ENCODE measurements at regions of chr9 and their contacts with region 1.

Region 1: GRCh38 chr9:128947422-128948301 is at the starts of genes DOLK and NUP188:
- DNase-seq: peak; percentile 99
- H3K4me3 Mint-ChIP-seq: peak within 1 kb of the TSS; percentile 98
- H3K27ac Mint-ChIP-seq: peak within 1 kb of the TSS; percentile 98
- H3K4me1 Mint-ChIP-seq: peaks cover 18% of the 10 kb centered on the region
- H3K27me3 Mint-ChIP-seq: no peaks in the 10 kb centered on the region
- total RNA-seq, gene DOLK: 13.0 and 13.3 TPM in 2 replicates
- total RNA-seq, gene NUP188: 161 and 175 TPM in 2 replicates

Region 2: DNA sequence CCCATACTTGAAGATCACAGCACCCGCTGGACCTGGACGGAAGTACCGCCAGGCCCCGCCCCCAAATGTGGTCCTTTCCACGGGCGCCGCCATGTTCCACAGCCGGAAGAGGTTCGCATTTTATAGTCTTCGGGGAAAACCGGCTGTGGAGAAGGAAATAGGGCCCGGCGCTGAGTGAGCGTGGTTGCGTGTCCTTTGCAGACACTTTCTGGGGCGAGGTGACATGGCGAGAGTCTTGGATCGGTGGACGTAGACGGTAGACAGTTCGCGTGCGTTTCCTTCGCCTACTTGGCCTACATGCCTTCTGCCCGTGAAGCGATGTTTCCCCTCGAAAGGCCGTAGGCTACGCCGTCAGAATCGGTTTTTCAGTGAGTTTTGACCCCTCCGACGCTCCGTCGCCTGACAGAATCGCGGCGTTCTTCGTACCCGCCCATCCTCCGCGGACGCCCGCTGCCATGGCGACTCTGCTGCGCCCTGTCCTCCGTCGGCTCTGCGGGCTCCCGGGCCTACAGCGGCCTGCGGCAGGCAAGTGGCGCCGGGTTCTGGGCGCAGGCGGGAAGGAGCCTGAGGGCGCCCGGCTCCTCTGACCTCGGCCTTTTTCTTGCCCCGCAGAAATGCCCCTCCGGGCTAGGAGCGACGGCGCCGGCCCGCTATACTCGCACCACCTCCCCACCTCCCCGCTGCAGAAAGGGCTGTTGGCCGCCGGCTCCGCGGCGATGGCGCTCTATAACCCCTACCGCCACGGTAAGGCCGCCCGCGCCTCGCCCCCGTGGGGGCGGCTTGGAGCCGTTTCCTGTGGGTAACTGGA is 625.1 kb before region 1 on chr9 and contains the starts of genes COQ4 and TRUB2:
- intact Hi-C with region 1: loop called (anchors 5 kb)
- DNase-seq: peak; percentile 90
- H3K4me3 Mint-ChIP-seq: peak within 1 kb of the TSS; percentile 99
- H3K27ac Mint-ChIP-seq: peak within 1 kb of the TSS; percentile 99
- H3K4me1 Mint-ChIP-seq: peaks cover 11% of the 10 kb centered on the region
- H3K27me3 Mint-ChIP-seq: no peaks in the 10 kb centered on the region
- total RNA-seq, gene COQ4: 49.6 and 52.2 TPM in 2 replicates
- total RNA-seq, gene TRUB2: 33.5 and 36.1 TPM in 2 replicates

Region 3: GRCh38 chr9:128902351-128903078 is 45.1 kb before region 1 on chr9:
- intact Hi-C with region 1: loop called (anchors 2 kb)
- DNase-seq: peak; percentile 82
- H3K4me3 Mint-ChIP-seq: peak overlapping the region; percentile 53
- H3K27ac Mint-ChIP-seq: peak overlapping the region; percentile 84
- H3K4me1 Mint-ChIP-seq: peaks cover 54% of the 10 kb centered on the region
- H3K27me3 Mint-ChIP-seq: no peaks in the 10 kb centered on the region

Region 4: DNA sequence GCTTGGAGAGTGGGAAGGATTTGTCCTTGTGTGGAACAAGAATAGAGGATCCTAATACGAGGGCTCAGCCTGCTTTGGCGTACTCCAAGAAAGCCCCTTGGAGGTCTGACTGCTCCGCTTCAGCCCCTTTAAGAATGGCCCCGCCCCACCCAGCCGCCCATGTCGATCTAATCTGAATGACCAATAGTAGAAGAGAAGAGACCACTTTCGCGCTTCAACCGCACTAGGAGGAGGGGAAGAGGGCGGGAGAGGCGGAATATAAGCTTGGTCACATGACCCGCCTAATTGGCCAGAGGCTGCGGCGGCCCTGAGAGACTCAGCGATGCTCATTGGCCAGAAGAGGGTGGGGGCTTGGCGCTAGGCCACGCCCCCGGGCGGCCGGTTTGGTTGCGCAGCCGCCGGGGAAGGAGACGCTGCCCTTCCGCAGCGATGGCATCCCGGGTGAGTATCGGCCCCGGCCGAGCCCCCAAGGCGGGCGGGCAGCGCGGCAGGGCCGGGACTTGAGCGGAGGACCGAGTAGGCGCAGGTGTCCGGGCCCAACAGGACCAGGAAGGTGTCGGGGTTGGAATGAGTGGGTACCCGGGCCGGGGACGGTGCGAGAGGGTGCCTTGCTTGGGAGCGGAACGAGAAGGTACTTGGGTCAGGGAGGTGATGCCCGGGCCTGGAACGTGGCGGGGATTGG is 88.7 kb after region 1 on chr9 and contains the start of gene MIGA2:
- intact Hi-C with region 1: loop called (anchors 2 kb)
- DNase-seq: peak; percentile 94
- H3K4me3 Mint-ChIP-seq: peak within 1 kb of the TSS; percentile 94
- H3K27ac Mint-ChIP-seq: peak within 1 kb of the TSS; percentile 54
- H3K4me1 Mint-ChIP-seq: peaks cover 22% of the 10 kb centered on the region
- H3K27me3 Mint-ChIP-seq: no peaks in the 10 kb centered on the region
- total RNA-seq, gene MIGA2: 41.5 and 41.7 TPM in 2 replicates

Region 5: GRCh38 chr9:130088051-130088450 is 1140.4 kb after region 1 on chr9:
- intact Hi-C with region 1: no loop called
- DNase-seq: no peak
- H3K4me3 Mint-ChIP-seq: no peak overlapping the region
- H3K27ac Mint-ChIP-seq: peak overlapping the region; percentile 24
- H3K4me1 Mint-ChIP-seq: no peaks in the 10 kb centered on the region
- H3K27me3 Mint-ChIP-seq: no peaks in the 10 kb centered on the region